ENCODE measurements at regions of chr18 and their contacts with region 1.

Region 1: DNA sequence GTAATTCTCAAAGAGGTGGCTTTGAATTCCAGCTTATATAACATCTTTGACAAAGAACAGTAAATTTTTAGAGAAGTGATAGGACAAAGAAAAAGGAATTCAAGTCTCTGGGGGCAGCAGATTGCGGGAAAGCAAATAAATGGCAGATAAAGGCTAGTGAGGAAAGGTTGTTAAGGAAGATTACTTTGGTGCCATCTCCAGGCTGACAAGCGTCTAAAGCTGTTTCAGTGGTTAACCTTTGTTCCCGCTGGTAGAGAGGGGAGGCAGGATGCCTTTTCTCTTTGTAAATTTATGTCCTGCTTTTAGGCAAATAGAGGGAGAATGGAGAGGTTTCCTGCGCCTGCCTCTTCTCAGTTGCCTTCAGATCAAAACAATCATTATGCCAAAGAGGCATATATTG is 431.2 kb upstream of the CHST9 start:
- DNase-seq: no peak
- H3K4me3 ChIP-seq: no peak overlapping the region
- H3K27ac ChIP-seq: no peak overlapping the region
- H3K4me1 ChIP-seq: no peaks in the 10 kb centered on the region
- H3K27me3 ChIP-seq: peaks cover 5% of the 10 kb centered on the region; the same call in 1 of the 2 replicates

Region 2: DNA sequence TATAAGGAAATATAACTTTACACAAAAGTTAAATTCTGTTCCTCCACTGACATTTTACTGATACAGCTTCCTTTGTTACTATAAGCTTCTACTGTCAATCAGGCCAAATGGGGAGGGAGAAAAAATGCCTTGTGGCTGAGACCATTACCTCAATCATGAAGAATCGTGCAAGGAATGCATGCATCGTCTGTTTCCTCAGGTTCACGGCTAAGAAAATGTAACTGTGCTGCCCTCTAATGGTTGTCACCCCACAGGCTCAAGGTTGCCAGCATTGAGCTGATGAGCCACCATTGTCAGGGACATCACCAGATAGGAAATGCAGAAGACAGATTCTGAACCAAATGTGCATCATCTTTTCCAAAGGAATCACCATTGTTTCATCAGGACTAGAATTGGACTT is 133.7 kb after region 1 on chr18:
- in situ Hi-C with region 1: loop called (anchors 10 kb)
- DNase-seq: peak; percentile 66
- H3K4me3 ChIP-seq: no peak overlapping the region
- H3K27ac ChIP-seq: no peak overlapping the region
- H3K4me1 ChIP-seq: no peaks in the 10 kb centered on the region
- H3K27me3 ChIP-seq: peaks cover 53% of the 10 kb centered on the region

Region 3: GRCh38 chr18:28716333-28716732 is 1100.0 kb after region 1 on chr18:
- in situ Hi-C with region 1: no loop called
- DNase-seq: no peak
- H3K4me3 ChIP-seq: no peak overlapping the region
- H3K27ac ChIP-seq: no peak overlapping the region
- H3K4me1 ChIP-seq: no peaks in the 10 kb centered on the region
- H3K27me3 ChIP-seq: no peaks in the 10 kb centered on the region